ENCODE measurements at regions of chr11 and their contacts with region 1.

Region 1: GRCh38 chr11:122628810-122629555 is 26.5 kb upstream of the UBASH3B start:
- DNase-seq: peak; percentile 7 to 78 (median 62)
- ATAC-seq: peak; percentile 85 to 94 (median 90)
- H3K4me3 ChIP-seq: no peak overlapping the region
- H3K4me3 Mint-ChIP-seq: no peak overlapping the region
- H3K27ac ChIP-seq: no peak overlapping the region
- H3K27ac Mint-ChIP-seq: no peak overlapping the region
- H3K4me1 ChIP-seq: peaks cover 8 to 10% of the 10 kb centered on the region in 2 experiments
- H3K4me1 Mint-ChIP-seq: peaks cover 7 to 11% (median 7%) of the 10 kb centered on the region in 3 donors
- H3K27me3 ChIP-seq: no peaks in the 10 kb centered on the region
- H3K27me3 Mint-ChIP-seq: no peaks in the 10 kb centered on the region

Region 2: DNA sequence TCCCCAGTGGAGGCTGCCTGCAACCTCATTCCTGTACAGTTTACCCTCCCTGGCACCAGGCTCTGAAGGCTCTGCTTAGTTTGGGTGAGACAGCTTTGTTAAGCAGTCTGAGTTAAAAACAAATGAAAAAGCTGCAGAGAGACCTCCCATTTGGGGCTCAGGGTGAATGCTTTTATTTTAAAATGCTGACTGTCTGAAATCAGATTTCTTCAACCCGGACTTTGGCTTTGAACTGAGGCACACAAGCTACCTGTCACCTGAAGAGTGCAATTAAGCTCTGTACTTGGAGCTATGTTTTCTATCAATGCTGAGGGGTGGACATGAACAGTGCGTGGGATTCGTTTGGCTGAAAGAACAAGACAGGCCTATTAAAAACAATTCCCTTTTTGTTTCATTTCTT is 958.7 kb before region 1 on chr11:
- CTCF ChIA-PET with region 1: interaction called in 1 of 2 experiments, 10 read pairs
- POLR2A ChIA-PET with region 1: no interaction called
- DNase-seq: no peak
- ATAC-seq: no peak
- H3K4me3 ChIP-seq: no peak overlapping the region
- H3K4me3 Mint-ChIP-seq: no peak overlapping the region
- H3K27ac ChIP-seq: no peak overlapping the region
- H3K27ac Mint-ChIP-seq: no peak overlapping the region
- H3K4me1 ChIP-seq: no peaks in the 10 kb centered on the region
- H3K4me1 Mint-ChIP-seq: no peaks in the 10 kb centered on the region
- H3K27me3 ChIP-seq: no peaks in the 10 kb centered on the region
- H3K27me3 Mint-ChIP-seq: peaks cover 0 to 4% of the 10 kb centered on the region in 2 donors

Region 3: DNA sequence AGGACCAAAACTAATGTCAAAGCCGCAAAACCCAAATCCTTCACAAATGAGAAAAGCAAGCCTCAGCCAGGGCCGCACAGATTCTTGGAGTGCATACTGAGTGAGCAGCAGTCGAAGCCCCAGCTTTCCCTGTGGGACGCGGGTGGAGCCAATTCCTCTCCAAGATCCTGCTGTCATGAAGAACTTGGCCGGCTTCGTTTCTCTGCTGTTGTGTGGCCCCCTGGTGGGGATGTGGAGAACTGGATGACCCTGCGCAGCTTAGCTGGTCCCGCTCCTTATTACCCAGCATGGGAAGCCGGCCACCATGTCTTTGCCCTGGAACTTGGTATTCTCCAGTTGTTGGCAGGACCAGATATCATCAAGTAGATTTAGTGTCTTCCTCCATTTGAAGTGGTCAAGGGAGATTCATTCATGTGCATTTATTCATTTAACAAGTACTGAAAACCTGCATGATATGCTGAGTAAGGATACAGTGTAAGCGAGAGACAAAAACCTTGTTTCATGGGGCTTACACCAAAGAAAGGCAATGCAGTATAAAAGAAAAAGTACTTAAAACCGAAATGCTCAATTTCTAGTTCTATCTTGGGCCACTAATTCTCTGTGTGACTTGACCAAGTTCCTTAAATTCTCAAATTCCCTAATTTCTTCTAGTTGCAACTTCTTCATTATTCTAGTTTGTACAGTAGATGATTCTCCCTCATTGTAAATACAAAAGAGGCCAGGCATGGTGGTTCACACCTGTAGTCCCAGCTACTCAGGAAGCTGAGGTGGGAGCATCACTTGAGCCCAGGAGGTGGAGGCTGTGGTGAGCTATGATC is 152.6 kb after region 1 on chr11:
- CTCF ChIA-PET with region 1: interaction called, 27 to 29 read pairs
- POLR2A ChIA-PET with region 1: interaction called in 1 of 2 experiments, 8 read pairs
- DNase-seq: peak; percentile 35 to 83 (median 66)
- ATAC-seq: peak; percentile 83 to 88 (median 86)
- H3K4me3 ChIP-seq: no peak overlapping the region
- H3K4me3 Mint-ChIP-seq: no peak overlapping the region
- H3K27ac ChIP-seq: no peak overlapping the region
- H3K27ac Mint-ChIP-seq: no peak overlapping the region
- H3K4me1 ChIP-seq: peaks cover 0 to 6% of the 10 kb centered on the region in 2 experiments
- H3K4me1 Mint-ChIP-seq: peaks cover 2 to 20% (median 10%) of the 10 kb centered on the region in 3 donors
- H3K27me3 ChIP-seq: no peaks in the 10 kb centered on the region
- H3K27me3 Mint-ChIP-seq: no peaks in the 10 kb centered on the region

Region 4: DNA sequence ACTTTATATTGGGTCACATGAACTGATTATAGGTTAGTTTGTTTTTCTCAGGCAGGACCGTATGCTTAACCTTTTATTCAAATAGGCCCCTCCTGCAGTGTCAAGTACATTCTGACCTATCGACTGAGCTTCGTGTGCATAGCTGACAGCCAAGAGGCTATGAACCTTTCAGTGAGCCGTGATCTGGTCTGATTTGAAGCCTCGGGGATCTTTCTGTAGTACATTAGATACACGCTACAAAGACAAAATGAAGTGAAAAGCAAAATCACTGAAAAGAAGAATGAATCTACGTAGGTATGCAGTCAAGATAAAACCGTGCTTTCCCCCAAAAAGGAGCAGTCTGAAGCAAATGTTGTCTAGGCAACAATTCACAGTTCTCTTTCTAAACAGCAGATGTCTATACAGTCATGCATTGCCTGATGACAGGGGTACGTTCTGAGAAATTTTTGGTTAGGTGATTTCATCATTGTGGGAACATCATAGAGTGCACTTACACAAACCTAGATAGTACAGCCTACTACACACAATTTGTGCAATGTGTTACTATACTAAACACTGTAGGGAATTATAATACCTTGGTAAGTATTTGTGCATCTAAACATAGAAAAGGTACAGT is 271.7 kb after region 1 on chr11:
- CTCF ChIA-PET with region 1: no interaction called
- POLR2A ChIA-PET with region 1: interaction called in 1 of 2 experiments, 11 read pairs
- DNase-seq: no peak
- ATAC-seq: no peak
- H3K4me3 ChIP-seq: no peak overlapping the region
- H3K4me3 Mint-ChIP-seq: no peak overlapping the region
- H3K27ac ChIP-seq: no peak overlapping the region
- H3K27ac Mint-ChIP-seq: no peak overlapping the region
- H3K4me1 ChIP-seq: no peaks in the 10 kb centered on the region
- H3K4me1 Mint-ChIP-seq: no peaks in the 10 kb centered on the region
- H3K27me3 ChIP-seq: no peaks in the 10 kb centered on the region
- H3K27me3 Mint-ChIP-seq: no peaks in the 10 kb centered on the region

Measured in T-cell (primary cell).